ENCODE measurements at regions of chr7 and their contacts with region 1.

Region 1: GRCh38 chr7:50206453-50207250 is 97.9 kb upstream of the IKZF1 start:
- DNase-seq: no peak
- H3K4me3 ChIP-seq: no peak overlapping the region
- H3K27ac ChIP-seq: no peak overlapping the region
- H3K4me1 ChIP-seq: no peaks in the 10 kb centered on the region
- H3K27me3 ChIP-seq: no peaks in the 10 kb centered on the region
- CTCF ChIP-seq: no peak
- EP300 ChIP-seq: no peak
- RAD21 ChIP-seq: no peak

Region 2: DNA sequence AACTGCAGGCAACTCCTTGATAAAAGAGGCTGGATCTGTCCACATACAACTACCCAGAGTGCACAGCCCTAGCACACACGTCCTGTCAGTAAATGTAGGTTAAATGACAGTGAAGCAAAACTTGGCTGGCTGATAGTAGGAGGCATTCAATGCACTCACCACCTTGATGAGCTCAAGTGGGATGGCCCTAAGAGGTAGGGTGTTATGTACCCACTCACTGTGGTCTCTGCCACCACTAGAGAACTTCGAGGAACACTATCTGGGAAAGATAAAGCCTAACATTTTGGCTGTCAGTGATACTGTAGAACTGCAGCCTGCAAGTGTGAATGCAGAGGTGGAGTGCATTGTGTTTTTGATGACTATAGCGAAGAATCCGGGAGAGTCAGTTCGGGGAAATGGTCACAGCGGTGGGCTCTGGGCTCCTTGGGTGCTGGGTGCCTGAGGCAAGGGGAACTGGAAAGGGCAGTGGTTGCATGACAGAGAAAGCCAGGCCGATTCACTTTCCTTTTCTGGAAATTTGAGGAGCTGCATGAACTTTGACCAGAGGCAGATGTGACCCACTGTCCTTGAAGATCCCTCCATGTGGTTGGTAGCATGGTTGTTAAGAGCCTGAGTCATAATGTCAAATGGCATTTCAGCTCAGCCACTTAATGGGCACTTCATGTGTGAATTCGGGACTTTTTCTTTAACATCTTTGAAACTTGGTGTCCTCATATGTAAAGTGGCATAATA is 20.5 kb before region 1 on chr7:
- CTCF ChIA-PET with region 1: interaction called, 65 read pairs
- POLR2A ChIA-PET with region 1: no interaction called
- DNase-seq: no peak
- H3K4me3 ChIP-seq: no peak overlapping the region
- H3K27ac ChIP-seq: no peak overlapping the region
- H3K4me1 ChIP-seq: no peaks in the 10 kb centered on the region
- H3K27me3 ChIP-seq: no peaks in the 10 kb centered on the region
- CTCF ChIP-seq: no peak
- EP300 ChIP-seq: no peak
- RAD21 ChIP-seq: no peak

Region 3: GRCh38 chr7:50273870-50274269 is 67.2 kb after region 1 on chr7:
- CTCF ChIA-PET with region 1: interaction called, 10 read pairs
- POLR2A ChIA-PET with region 1: no interaction called
- DNase-seq: no peak
- H3K4me3 ChIP-seq: no peak overlapping the region
- H3K27ac ChIP-seq: no peak overlapping the region
- H3K4me1 ChIP-seq: no peaks in the 10 kb centered on the region
- H3K27me3 ChIP-seq: no peaks in the 10 kb centered on the region
- CTCF ChIP-seq: no peak
- EP300 ChIP-seq: no peak
- RAD21 ChIP-seq: no peak

Region 4: GRCh38 chr7:50359995-50360925 is 153.6 kb after region 1 on chr7:
- CTCF ChIA-PET with region 1: interaction called, 21 read pairs
- POLR2A ChIA-PET with region 1: no interaction called
- DNase-seq: peak; percentile 57
- H3K4me3 ChIP-seq: no peak overlapping the region
- H3K27ac ChIP-seq: no peak overlapping the region
- H3K4me1 ChIP-seq: peaks cover 0 to 11% of the 10 kb centered on the region in 2 experiments; a peak in 1 of 4 replicates
- H3K27me3 ChIP-seq: 0 out of 2 replicates have a peak, but pooled peaks cover 4% of the 10 kb centered on the region
- CTCF ChIP-seq: no peak
- EP300 ChIP-seq: no peak
- RAD21 ChIP-seq: no peak

Region 5: DNA sequence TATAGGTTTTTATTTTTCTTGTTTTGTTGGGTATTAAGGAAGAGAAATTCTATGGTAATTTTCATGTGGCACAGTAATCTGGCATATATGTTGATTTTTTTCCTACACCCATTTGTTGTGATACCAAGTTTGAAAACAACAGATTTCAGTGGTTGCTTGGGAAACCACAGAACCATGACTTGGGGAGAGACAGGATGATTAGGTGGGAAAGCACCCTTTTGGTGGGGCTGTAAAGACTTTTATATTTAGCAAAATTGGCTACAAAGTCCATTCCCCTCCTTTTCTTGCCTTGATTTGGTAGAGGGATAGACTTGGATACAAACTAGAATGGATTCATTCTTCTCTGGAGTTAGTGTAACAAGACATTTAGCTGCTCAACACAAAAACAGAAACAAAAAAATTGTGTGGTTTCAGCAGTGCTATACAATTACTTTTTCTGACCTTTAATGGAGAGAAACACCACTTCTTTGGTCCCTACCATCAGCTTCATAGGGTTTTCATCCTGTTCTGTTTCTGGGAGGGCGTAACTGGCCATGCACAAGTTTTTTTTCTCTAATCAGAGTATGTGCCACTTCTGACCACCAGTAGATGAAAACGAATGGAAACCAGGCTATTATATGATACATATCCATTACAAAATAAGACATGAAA is 190.8 kb after region 1 on chr7:
- CTCF ChIA-PET with region 1: interaction called, 31 read pairs
- POLR2A ChIA-PET with region 1: no interaction called
- DNase-seq: no peak
- H3K4me3 ChIP-seq: no peak overlapping the region
- H3K27ac ChIP-seq: no peak overlapping the region
- H3K4me1 ChIP-seq: peaks cover 0 to 9% of the 10 kb centered on the region in 2 experiments; a peak in 1 of 4 replicates
- H3K27me3 ChIP-seq: peaks cover 39% of the 10 kb centered on the region
- CTCF ChIP-seq: no peak
- EP300 ChIP-seq: no peak
- RAD21 ChIP-seq: no peak

Region 6: DNA sequence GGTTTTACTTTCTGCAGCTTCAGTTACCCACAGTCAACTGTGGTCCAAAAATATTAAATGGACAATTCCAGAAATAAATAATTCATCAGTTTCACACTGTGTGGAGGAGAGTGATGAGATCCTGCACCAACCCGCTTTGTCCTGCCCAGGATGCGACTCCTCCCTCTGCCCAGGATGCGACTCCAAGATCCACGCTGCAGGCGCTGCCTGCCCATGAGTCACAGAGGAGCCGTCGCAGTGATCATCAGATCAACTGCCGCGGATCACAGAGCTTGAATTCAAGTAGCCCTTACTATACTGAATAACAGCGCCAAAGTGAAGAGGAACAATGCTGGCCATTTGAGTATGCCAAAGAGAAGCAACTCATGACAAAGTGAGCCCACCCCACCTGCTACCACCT is 514.5 kb after region 1 on chr7:
- CTCF ChIA-PET with region 1: no interaction called
- POLR2A ChIA-PET with region 1: no interaction called
- DNase-seq: no peak
- H3K4me3 ChIP-seq: peak overlapping the region in 1 of 2 experiments; percentile 21; a peak in 2 of 4 replicates
- H3K27ac ChIP-seq: peak overlapping the region in 1 of 2 experiments; percentile 70; a peak in 2 of 4 replicates
- H3K4me1 ChIP-seq: peaks cover 0 to 21% of the 10 kb centered on the region in 2 experiments; a peak in 3 of 4 replicates
- H3K27me3 ChIP-seq: no peaks in the 10 kb centered on the region
- CTCF ChIP-seq: no peak
- EP300 ChIP-seq: no peak
- RAD21 ChIP-seq: no peak

Measured in SK-N-SH (cell line).